ENCODE measurements at regions of chr16 and their contacts with region 1.

Region 1: GRCh38 chr16:10485698-10486382 is 94.6 kb downstream of the EMP2 start:
- DNase-seq: no peak
- H3K4me3 Mint-ChIP-seq: no peak overlapping the region
- H3K27ac Mint-ChIP-seq: peak overlapping the region; percentile 43
- H3K4me1 Mint-ChIP-seq: peaks cover 9% of the 10 kb centered on the region
- H3K27me3 Mint-ChIP-seq: no peaks in the 10 kb centered on the region
- CTCF ChIP-seq: no peak

Region 2: GRCh38 chr16:9159839-9160550 is 1325.8 kb before region 1 on chr16:
- CTCF ChIA-PET with region 1: interaction called, 12 read pairs
- intact Hi-C with region 1: no loop called
- DNase-seq: peak; percentile 89
- H3K4me3 Mint-ChIP-seq: no peak overlapping the region
- H3K27ac Mint-ChIP-seq: no peak overlapping the region
- H3K4me1 Mint-ChIP-seq: no peaks in the 10 kb centered on the region
- H3K27me3 Mint-ChIP-seq: peaks cover 7% of the 10 kb centered on the region
- CTCF ChIP-seq: peak; percentile 90

Region 3: GRCh38 chr16:10339777-10340732 is 145.8 kb before region 1 on chr16:
- CTCF ChIA-PET with region 1: no interaction called
- intact Hi-C with region 1: no loop called
- DNase-seq: no peak
- H3K4me3 Mint-ChIP-seq: no peak overlapping the region
- H3K27ac Mint-ChIP-seq: no peak overlapping the region
- H3K4me1 Mint-ChIP-seq: peaks cover 20% of the 10 kb centered on the region
- H3K27me3 Mint-ChIP-seq: no peaks in the 10 kb centered on the region
- CTCF ChIP-seq: no peak

Measured in Calu3 (cell line).